K562 (cell line): ENCODE measurements at regions of chr4 and their contacts with region 1.

Region 1: GRCh38 chr4:109729718-109730618 is at the start of gene PLA2G12A:
- DNase-seq: peak; percentile 80 to 95 (median 93)
- ATAC-seq: peak; percentile 89
- H3K4me3 ChIP-seq: peak within 1 kb of the TSS; percentile 81
- H3K27ac ChIP-seq: peak within 1 kb of the TSS; percentile 89
- H3K4me1 ChIP-seq: peaks cover 15 to 30% of the 10 kb centered on the region in 2 experiments
- H3K27me3 ChIP-seq: no peaks in the 10 kb centered on the region
- CTCF ChIP-seq: no peak
- EP300 ChIP-seq: no peak
- POLR2A ChIP-seq: peak; percentile 64
- RAD21 ChIP-seq: no peak
- polyA plus RNA-seq, gene PLA2G12A: 24.2 to 24.6 TPM

Region 2: GRCh38 chr4:109702950-109703663 is 26.9 kb before region 1 on chr4 and contains the start of gene CASP6:
- CTCF ChIA-PET with region 1: no interaction called
- POLR2A ChIA-PET with region 1: interaction called, 3 read pairs
- in situ Hi-C with region 1: no loop called
- intact Hi-C with region 1: loop called (anchors 2 kb)
- DNase-seq: peak; percentile 83 to 88 (median 85)
- ATAC-seq: peak; percentile 90
- H3K4me3 ChIP-seq: peak within 1 kb of the TSS; percentile 80
- H3K27ac ChIP-seq: peak within 1 kb of the TSS; percentile 82
- H3K4me1 ChIP-seq: peaks cover 22 to 24% of the 10 kb centered on the region in 2 experiments
- H3K27me3 ChIP-seq: no peaks in the 10 kb centered on the region
- CTCF ChIP-seq: peak; percentile 76 to 86 (median 77)
- EP300 ChIP-seq: no peak
- POLR2A ChIP-seq: peak; percentile 81
- RAD21 ChIP-seq: peak; percentile 68 to 72
- polyA plus RNA-seq, gene CASP6: 23.0 to 31.7 TPM